ENCODE measurements at regions of chr2 and their contacts with region 1.

Region 1: DNA sequence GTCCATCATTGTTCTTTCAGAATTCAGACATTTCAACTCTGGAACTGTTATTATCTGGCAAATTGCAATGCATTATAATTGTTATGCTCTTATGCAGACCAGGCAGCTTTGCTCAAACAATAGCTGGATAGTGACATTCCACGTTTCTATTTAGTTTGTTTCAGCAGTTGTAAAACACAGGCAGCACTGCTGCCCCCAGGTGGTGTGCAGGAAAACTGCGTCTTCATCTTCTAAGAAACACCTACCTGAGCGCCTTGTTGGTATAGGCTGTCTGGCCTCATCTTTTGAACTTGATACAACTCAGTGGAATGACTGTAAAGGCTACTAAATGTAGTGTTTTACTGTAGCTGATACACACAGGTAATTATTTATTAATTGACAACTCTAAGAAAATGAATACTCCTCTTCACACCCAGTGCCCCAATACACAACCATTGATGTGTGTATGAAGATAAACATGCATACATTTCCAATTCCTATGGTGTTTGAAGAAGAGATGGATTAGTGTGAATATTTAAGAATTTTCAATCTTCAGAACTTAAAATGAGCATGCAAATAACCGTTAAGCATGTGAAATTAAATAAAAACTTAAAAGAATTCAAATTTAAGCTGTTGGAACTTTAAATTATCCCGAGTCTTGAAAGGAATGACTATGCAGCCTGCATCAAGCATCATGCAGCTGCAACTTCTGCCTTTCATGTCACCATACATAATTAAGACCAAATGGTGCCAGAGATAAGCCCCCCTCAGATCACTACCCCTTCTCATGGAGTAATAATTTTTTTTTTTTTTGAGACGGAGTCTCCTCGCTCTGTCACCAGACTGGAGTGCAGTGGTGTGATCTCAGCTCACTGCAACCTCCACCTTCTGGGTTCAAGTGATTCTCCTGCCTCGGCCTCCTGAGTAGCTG is 85.6 kb downstream of the CD8B2 start:
- DNase-seq: peak; percentile 40 to 76 (median 74)
- H3K4me3 ChIP-seq: no peak overlapping the region
- H3K27ac ChIP-seq: no peak overlapping the region
- H3K4me1 ChIP-seq: peaks cover 0 to 2% (median 0%) of the 10 kb centered on the region in 4 experiments
- H3K27me3 ChIP-seq: no peaks in the 10 kb centered on the region

Region 2: GRCh38 chr2:106562268-106563186 is 10.3 kb before region 1 on chr2:
- CTCF ChIA-PET with region 1: interaction called, 109 read pairs
- POLR2A ChIA-PET with region 1: no interaction called
- DNase-seq: peak in 1 of 3 donors; percentile 32
- H3K4me3 ChIP-seq: no peak overlapping the region
- H3K27ac ChIP-seq: no peak overlapping the region
- H3K4me1 ChIP-seq: peaks cover 8 to 43% (median 15%) of the 10 kb centered on the region in 4 experiments
- H3K27me3 ChIP-seq: no peaks in the 10 kb centered on the region

Region 3: DNA sequence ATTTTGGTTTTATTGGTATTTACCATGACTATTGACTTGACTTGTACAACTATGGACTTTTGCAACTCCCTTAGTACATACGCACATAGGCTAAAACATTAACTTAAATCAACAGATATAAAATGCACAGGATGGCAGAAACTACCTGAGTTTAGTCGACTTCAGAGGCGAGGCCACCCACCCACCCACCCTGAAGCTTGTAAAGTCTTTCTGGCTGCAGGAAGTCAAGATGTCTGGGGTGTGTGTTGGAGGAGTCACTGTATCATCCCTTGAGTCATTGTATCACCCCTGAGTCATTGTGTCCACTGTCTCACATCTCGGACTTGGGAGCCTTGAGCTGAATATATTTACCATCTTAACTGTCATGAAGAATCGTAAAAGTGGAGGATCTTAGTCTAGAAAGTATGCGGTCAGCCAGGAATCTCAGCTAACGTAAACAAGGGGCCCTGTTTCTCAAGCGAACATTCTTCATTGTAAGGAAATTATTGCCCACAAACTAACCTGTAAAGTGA is 453.1 kb after region 1 on chr2:
- CTCF ChIA-PET with region 1: no interaction called
- POLR2A ChIA-PET with region 1: no interaction called
- DNase-seq: no peak
- H3K4me3 ChIP-seq: no peak overlapping the region
- H3K27ac ChIP-seq: no peak overlapping the region
- H3K4me1 ChIP-seq: no peaks in the 10 kb centered on the region
- H3K27me3 ChIP-seq: no peaks in the 10 kb centered on the region

Region 4: GRCh38 chr2:107132070-107132469 is 559.3 kb after region 1 on chr2:
- CTCF ChIA-PET with region 1: no interaction called
- POLR2A ChIA-PET with region 1: no interaction called
- DNase-seq: peak; percentile 56 to 93 (median 84)
- H3K4me3 ChIP-seq: peak overlapping the region in 5 of 7 experiments; percentile 35 to 73 (median 53)
- H3K27ac ChIP-seq: no peak overlapping the region
- H3K4me1 ChIP-seq: peaks cover 6 to 20% (median 7%) of the 10 kb centered on the region in 4 experiments
- H3K27me3 ChIP-seq: no peaks in the 10 kb centered on the region

Measured in common myeloid progenitor, CD34-positive (primary cell).